GM12878 (cell line): ENCODE measurements at regions of chr5 and their contacts with region 1.

Region 1: GRCh38 chr5:43556857-43557542 is at the start of gene PAIP1:
- DNase-seq: peak; percentile 37
- ATAC-seq: peak; percentile 84
- H3K4me3 ChIP-seq: peak within 1 kb of the TSS; percentile 94
- H3K27ac ChIP-seq: peak within 1 kb of the TSS; percentile 87
- H3K4me1 ChIP-seq: peaks cover 13% of the 10 kb centered on the region
- H3K27me3 ChIP-seq: no peaks in the 10 kb centered on the region
- CTCF ChIP-seq: peak in 2 of 3 experiments; percentile 56 to 61; a peak in 5 of 6 replicates
- EP300 ChIP-seq: no peak
- POLR2A ChIP-seq: peak; percentile 86
- RAD21 ChIP-seq: no peak; the same call in 1 of the 2 replicates
- polyA plus RNA-seq, gene PAIP1: 37.4 to 52.7 TPM

Region 2: GRCh38 chr5:43543434-43543833 is 13.6 kb before region 1 on chr5:
- CTCF ChIA-PET with region 1: interaction called, 21 read pairs
- POLR2A ChIA-PET with region 1: interaction called, 19 read pairs
- RAD21 ChIA-PET with region 1: interaction called, 10 read pairs
- SMC1A ChIA-PET with region 1: interaction called, 27 read pairs
- in situ Hi-C with region 1: no loop called
- intact Hi-C with region 1: no loop called
- DNase-seq: no peak
- ATAC-seq: peak; percentile 14; the same call in 1 of the 3 replicates
- H3K4me3 ChIP-seq: no peak overlapping the region
- H3K27ac ChIP-seq: no peak overlapping the region
- H3K4me1 ChIP-seq: no peaks in the 10 kb centered on the region
- H3K27me3 ChIP-seq: no peaks in the 10 kb centered on the region
- CTCF ChIP-seq: no peak
- EP300 ChIP-seq: no peak
- POLR2A ChIP-seq: no peak
- RAD21 ChIP-seq: no peak

Region 3: DNA sequence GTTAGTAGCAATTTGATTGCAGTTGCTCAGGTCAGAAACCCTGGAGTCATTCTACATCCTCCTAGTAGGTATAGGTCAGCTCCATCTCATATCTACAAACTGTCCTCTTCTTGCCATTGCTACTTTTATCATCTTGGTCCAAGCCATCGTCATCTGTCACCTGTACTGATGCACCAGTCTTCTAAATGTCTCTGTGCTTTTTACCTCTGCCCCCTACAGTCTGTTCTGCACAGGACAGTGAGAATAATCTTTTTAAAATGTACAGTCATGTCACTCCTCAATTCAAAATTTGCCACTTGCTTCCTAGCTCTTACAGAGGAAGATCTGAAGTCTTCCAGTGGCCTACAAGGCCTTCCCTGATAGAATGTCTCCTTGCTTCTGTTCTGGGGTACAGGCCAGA is 52.8 kb after region 1 on chr5:
- CTCF ChIA-PET with region 1: interaction called, 31 read pairs
- POLR2A ChIA-PET with region 1: no interaction called
- RAD21 ChIA-PET with region 1: interaction called, 15 read pairs
- SMC1A ChIA-PET with region 1: interaction called, 7 read pairs
- in situ Hi-C with region 1: no loop called
- intact Hi-C with region 1: no loop called
- DNase-seq: no peak
- ATAC-seq: peak; percentile 96
- H3K4me3 ChIP-seq: no peak overlapping the region
- H3K27ac ChIP-seq: no peak overlapping the region
- H3K4me1 ChIP-seq: no peaks in the 10 kb centered on the region
- H3K27me3 ChIP-seq: no peaks in the 10 kb centered on the region
- CTCF ChIP-seq: peak; percentile 42 to 59 (median 54); a peak in 5 of 6 replicates
- EP300 ChIP-seq: no peak
- POLR2A ChIP-seq: no peak
- RAD21 ChIP-seq: peak; percentile 56